Breast epithelium (tissue), 4 donors: ENCODE measurements at regions of chr20 and their contacts with region 1.

Region 1: GRCh38 chr20:62059401-62059800 is 6.3 kb downstream of the TAF4 start:
- DNase-seq: no peak
- H3K4me3 ChIP-seq: no peak overlapping the region
- H3K27ac ChIP-seq: no peak overlapping the region
- H3K4me1 ChIP-seq: peaks cover 0 to 13% of the 10 kb centered on the region in 2 donors
- H3K27me3 ChIP-seq: no peaks in the 10 kb centered on the region
- CTCF ChIP-seq: no peak
- POLR2A ChIP-seq: no peak

Region 2: GRCh38 chr20:62121776-62122631 is 62.6 kb after region 1 on chr20 and contains the start of gene LSM14B:
- intact Hi-C with region 1: loop called (anchors 1 kb)
- DNase-seq: peak; percentile 95 to 97
- H3K4me3 ChIP-seq: peak within 1 kb of the TSS; percentile 89 to 96 (median 91)
- H3K27ac ChIP-seq: peak within 1 kb of the TSS; percentile 97 to 98
- H3K4me1 ChIP-seq: peaks cover 3 to 12% of the 10 kb centered on the region in 2 donors
- H3K27me3 ChIP-seq: peaks cover 0 to 20% of the 10 kb centered on the region in 2 donors
- CTCF ChIP-seq: peak in 1 of 3 donors; percentile 12
- POLR2A ChIP-seq: no peak
- total RNA-seq, gene LSM14B: 20.6 to 26.5 (median 25.6) TPM

Region 3: GRCh38 chr20:63246490-63247288 is 1187.3 kb after region 1 on chr20:
- intact Hi-C with region 1: no loop called
- DNase-seq: no peak
- H3K4me3 ChIP-seq: peak overlapping the region in 1 of 3 donors; percentile 15
- H3K27ac ChIP-seq: no peak overlapping the region
- H3K4me1 ChIP-seq: no peaks in the 10 kb centered on the region
- H3K27me3 ChIP-seq: peaks cover 0 to 68% of the 10 kb centered on the region in 2 donors
- CTCF ChIP-seq: no peak
- POLR2A ChIP-seq: no peak